ENCODE measurements at regions of chr7 and their contacts with region 1.

Region 1: DNA sequence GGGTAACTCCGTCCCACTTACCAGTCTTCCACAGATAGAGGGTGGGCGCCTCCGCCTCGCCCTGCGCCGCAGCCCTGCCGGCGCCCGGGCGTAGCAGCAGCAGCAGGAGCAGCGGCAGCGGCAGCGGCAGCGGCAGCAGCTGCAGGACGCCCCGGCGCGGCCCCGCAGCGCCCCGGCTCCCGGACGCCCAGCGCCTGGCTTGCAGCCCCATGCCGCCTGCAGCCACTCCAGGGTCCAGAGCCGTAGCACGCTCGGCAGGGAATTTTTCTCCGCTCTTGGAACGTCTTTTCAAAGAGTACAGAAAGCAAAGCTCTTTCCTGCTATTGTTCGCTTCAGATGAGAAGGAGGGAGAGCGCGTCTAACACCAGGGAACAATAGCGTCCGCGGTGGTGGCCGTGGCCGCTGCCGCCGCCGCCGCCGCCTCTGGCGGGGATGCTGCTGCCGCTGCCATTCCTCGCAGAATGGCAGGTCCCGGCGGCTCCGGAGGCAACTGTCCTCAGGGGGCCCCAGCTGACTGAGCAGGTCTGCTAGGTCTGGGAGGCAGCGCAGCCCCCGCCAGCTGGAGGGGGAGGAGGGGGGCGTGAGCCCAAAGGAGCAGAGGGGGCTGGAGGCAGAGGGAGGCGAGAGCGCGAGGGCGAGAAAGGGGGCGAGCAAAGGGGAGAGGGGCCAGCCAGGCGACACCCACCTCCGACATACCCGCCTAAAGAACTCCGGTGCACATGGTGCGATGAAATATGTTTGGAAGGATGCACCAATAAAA is at the start of gene THSD7A:
- DNase-seq: peak in 1 of 2 experiments; percentile 68
- H3K4me3 ChIP-seq: peak within 1 kb of the TSS; percentile 53
- H3K27ac ChIP-seq: no peak within 1 kb of the TSS
- H3K4me1 ChIP-seq: no peaks in the 10 kb centered on the region; the same call in 1 of the 2 replicates
- H3K27me3 ChIP-seq: no peaks in the 10 kb centered on the region
- CTCF ChIP-seq: no peak; the same call in 1 of the 2 replicates
- total RNA-seq, gene THSD7A: 1.6 and 4.0 TPM in 2 replicates

Region 2: GRCh38 chr7:11427686-11428273 is 404.1 kb before region 1 on chr7:
- CTCF ChIA-PET with region 1: no interaction called
- POLR2A ChIA-PET with region 1: no interaction called
- intact Hi-C with region 1: loop called (anchors 1 kb)
- DNase-seq: peak in 1 of 2 experiments; percentile 54
- H3K4me3 ChIP-seq: no peak overlapping the region
- H3K27ac ChIP-seq: no peak overlapping the region
- H3K4me1 ChIP-seq: no peaks in the 10 kb centered on the region
- H3K27me3 ChIP-seq: no peaks in the 10 kb centered on the region
- CTCF ChIP-seq: peak; percentile 90

Region 3: GRCh38 chr7:11748899-11749298 is 83.0 kb before region 1 on chr7:
- CTCF ChIA-PET with region 1: no interaction called
- POLR2A ChIA-PET with region 1: no interaction called
- intact Hi-C with region 1: loop called (anchors 1 kb)
- DNase-seq: no peak
- H3K4me3 ChIP-seq: no peak overlapping the region
- H3K27ac ChIP-seq: no peak overlapping the region
- H3K4me1 ChIP-seq: peaks cover 7% of the 10 kb centered on the region; the same call in 1 of the 2 replicates
- H3K27me3 ChIP-seq: no peaks in the 10 kb centered on the region
- CTCF ChIP-seq: peak; percentile 41; the same call in 1 of the 2 replicates

Region 4: DNA sequence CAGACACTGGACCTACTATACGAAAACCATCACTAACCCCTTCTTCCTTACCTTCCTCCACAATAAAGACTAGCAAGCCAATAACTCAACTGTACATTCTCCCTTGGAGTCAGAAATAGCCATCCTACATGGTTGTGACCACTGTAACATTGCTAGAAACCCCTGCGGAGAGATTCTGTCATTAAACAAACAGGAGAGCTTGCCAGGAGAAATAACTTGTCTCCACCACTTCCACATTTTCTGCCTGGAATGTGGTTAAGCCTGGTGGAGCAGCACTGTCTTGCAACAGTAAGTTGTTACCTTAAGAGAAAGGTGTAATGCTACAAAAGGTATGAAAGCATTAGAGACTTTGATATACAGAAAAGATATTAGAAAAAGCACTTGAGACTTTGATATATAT is 45.7 kb before region 1 on chr7:
- CTCF ChIA-PET with region 1: no interaction called
- POLR2A ChIA-PET with region 1: interaction called, 4 read pairs
- intact Hi-C with region 1: loop called (anchors 1 kb)
- DNase-seq: peak; percentile 69 to 92
- H3K4me3 ChIP-seq: no peak overlapping the region
- H3K27ac ChIP-seq: peak overlapping the region; percentile 60
- H3K4me1 ChIP-seq: peaks cover 40% of the 10 kb centered on the region
- H3K27me3 ChIP-seq: no peaks in the 10 kb centered on the region
- CTCF ChIP-seq: no peak

Region 5: DNA sequence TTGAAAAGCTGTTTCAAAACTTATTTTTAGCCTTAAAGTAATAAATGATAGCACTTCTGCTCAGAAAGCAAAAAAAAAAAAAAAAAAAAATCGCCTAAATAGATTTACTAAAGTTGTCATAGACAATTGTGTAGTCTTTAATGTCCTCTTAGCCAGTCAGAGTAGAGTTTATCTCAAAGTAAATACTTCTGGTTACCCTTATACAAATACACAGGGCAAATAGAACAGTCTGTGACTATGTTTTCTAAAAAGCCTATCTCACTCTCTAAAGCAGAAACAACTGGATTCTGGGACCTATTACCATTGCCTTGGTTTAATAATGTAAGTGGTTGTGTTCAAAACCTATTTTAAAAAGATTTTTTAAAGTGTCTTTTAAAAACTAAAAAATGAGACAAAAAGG is 156.3 kb after region 1 on chr7:
- CTCF ChIA-PET with region 1: no interaction called
- POLR2A ChIA-PET with region 1: no interaction called
- intact Hi-C with region 1: no loop called
- DNase-seq: no peak
- H3K4me3 ChIP-seq: no peak overlapping the region
- H3K27ac ChIP-seq: no peak overlapping the region
- H3K4me1 ChIP-seq: peaks cover 12% of the 10 kb centered on the region; the same call in 1 of the 2 replicates
- H3K27me3 ChIP-seq: no peaks in the 10 kb centered on the region
- CTCF ChIP-seq: no peak

Region 6: GRCh38 chr7:12067141-12067831 is 235.4 kb after region 1 on chr7:
- CTCF ChIA-PET with region 1: interaction called, 5 read pairs
- POLR2A ChIA-PET with region 1: no interaction called
- intact Hi-C with region 1: loop called (anchors 1 kb)
- DNase-seq: peak in 1 of 2 experiments; percentile 72
- H3K4me3 ChIP-seq: no peak overlapping the region
- H3K27ac ChIP-seq: peak overlapping the region; percentile 99
- H3K4me1 ChIP-seq: peaks cover 23% of the 10 kb centered on the region
- H3K27me3 ChIP-seq: no peaks in the 10 kb centered on the region
- CTCF ChIP-seq: peak; percentile 61

Region 7: GRCh38 chr7:12322284-12322902 is 490.5 kb after region 1 on chr7:
- CTCF ChIA-PET with region 1: no interaction called
- POLR2A ChIA-PET with region 1: no interaction called
- intact Hi-C with region 1: loop called (anchors 1 kb)
- DNase-seq: no peak
- H3K4me3 ChIP-seq: no peak overlapping the region
- H3K27ac ChIP-seq: no peak overlapping the region
- H3K4me1 ChIP-seq: no peaks in the 10 kb centered on the region
- H3K27me3 ChIP-seq: no peaks in the 10 kb centered on the region
- CTCF ChIP-seq: peak; percentile 88

Region 8: DNA sequence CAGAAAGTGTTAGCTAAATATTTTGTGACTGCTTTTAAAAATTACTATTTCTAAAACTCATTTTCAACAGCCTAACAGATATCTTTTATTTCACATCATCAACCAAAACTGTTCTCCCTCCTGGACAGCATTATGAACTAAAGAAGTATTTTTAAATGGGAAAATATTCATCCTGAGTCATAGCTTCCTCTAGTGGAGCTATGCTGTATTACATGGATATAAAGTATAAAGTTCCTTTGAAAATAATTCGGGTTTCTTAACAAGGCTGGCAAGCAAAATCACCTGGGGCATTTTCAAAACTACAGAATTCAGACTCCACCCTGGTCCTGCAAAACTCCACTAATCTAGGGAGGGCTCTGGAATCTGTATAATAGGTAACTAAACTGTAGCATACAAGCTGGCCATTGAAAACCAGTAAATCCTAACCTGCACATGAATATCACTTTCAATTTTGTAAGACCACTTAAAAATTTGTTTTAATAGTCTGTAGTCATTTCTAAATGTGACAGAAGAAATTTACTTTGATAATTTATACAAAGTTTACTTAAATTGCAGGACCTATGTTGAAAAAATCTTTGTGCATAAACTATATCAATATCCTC is 792.1 kb after region 1 on chr7:
- CTCF ChIA-PET with region 1: no interaction called
- POLR2A ChIA-PET with region 1: no interaction called
- intact Hi-C with region 1: loop called (anchors 5 kb)
- DNase-seq: peak in 1 of 2 experiments; percentile 41
- H3K4me3 ChIP-seq: no peak overlapping the region
- H3K27ac ChIP-seq: no peak overlapping the region
- H3K4me1 ChIP-seq: no peaks in the 10 kb centered on the region
- H3K27me3 ChIP-seq: no peaks in the 10 kb centered on the region
- CTCF ChIP-seq: peak; percentile 95

Measured in PC-9 (cell line).